Dendritic cell treated with granulocyte-macrophage colony-stimulating factor and Interleukin-4, amounts not matched to agents 40 ng/mL and 50 ng/mL, for 4 days (primary cell): ENCODE measurements at regions of chr7 and their contacts with region 1.

Region 1: DNA sequence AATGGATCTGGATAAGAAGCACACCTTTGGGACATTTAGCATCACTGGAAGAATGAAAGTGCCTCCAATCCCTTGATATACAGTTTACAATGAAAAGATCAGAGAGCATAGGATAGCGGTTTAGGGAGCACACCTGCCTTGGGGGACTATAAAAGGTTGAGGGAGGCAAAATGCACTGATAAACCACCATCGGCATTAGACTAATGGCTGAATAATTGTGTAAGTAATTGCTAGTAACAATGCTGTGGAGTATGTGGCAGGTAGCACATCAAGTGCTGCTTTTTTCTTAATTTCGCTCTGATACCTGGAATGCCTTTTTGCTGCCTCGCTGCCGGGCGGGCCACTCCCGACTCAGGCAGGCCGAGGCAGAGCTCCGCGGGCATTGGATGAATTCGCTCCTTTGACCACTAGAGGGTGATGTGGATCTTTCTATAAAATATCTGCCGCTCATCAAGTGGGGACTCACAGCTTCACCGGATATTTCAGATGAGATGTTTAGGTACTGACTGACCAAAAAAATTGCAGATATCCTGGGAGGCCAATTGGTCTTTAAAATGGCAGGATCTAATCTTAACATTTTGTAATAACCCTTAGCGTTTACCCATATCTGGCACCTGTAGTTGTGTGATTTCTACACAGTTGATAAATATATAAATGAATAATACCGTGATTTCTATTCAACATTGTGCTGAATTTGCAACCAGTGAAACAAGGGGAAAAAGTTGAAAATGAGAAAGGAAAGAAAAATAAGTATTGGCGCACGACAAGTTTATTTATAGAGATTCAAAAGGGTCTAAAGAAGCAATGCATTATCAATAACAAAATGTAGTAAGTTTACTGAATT is 116.8 kb upstream of the PRSS1 start:
- H3K4me3 Mint-ChIP-seq: no peak overlapping the region
- H3K27ac Mint-ChIP-seq: no peak overlapping the region
- H3K4me1 Mint-ChIP-seq: peaks cover 8% of the 10 kb centered on the region
- H3K27me3 Mint-ChIP-seq: peaks cover 17% of the 10 kb centered on the region

Region 2: GRCh38 chr7:142782922-142783900 is 150.7 kb after region 1 on chr7:
- intact Hi-C with region 1: loop called (anchors 1 kb)
- H3K4me3 Mint-ChIP-seq: no peak overlapping the region
- H3K27ac Mint-ChIP-seq: no peak overlapping the region
- H3K4me1 Mint-ChIP-seq: peaks cover 19% of the 10 kb centered on the region
- H3K27me3 Mint-ChIP-seq: peaks cover 11% of the 10 kb centered on the region

Region 3: GRCh38 chr7:142811154-142811737 is 178.7 kb after region 1 on chr7:
- intact Hi-C with region 1: loop called (anchors 1 kb)
- H3K4me3 Mint-ChIP-seq: no peak overlapping the region
- H3K27ac Mint-ChIP-seq: no peak overlapping the region
- H3K4me1 Mint-ChIP-seq: no peaks in the 10 kb centered on the region
- H3K27me3 Mint-ChIP-seq: peaks cover 31% of the 10 kb centered on the region

Region 4: DNA sequence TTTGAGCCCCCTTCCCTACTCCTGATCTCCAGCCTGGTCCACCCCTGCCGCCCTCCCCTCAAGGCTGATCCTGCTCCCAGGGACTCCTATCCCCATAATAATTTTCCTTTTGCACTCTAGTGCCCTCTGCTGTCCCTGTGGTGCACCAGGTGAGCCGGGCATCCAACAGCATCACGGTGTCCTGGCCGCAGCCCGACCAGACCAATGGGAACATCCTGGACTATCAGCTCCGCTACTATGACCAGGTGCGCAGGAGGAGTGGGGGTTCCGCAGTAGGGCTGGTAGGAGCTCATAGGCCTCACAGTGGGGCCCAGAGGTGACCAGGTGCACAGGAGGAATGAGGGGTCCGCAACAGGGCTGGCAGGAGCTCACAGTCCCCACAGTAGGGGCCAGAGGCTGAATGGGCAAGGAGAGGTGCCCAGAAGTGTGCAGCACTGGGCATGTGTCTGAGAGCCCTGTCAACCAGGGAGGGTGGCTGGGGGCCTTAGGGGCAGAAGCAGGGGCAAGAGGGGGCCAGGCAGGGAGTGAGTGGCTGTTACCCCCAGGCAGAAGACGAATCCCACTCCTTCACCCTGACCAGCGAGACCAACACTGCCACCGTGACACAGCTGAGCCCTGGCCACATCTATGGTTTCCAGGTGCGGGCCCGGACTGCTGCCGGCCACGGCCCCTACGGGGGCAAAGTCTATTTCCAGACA is 234.0 kb after region 1 on chr7:
- intact Hi-C with region 1: loop called (anchors 2 kb)
- H3K4me3 Mint-ChIP-seq: no peak overlapping the region
- H3K27ac Mint-ChIP-seq: no peak overlapping the region
- H3K4me1 Mint-ChIP-seq: peaks cover 19% of the 10 kb centered on the region
- H3K27me3 Mint-ChIP-seq: no peaks in the 10 kb centered on the region

Region 5: DNA sequence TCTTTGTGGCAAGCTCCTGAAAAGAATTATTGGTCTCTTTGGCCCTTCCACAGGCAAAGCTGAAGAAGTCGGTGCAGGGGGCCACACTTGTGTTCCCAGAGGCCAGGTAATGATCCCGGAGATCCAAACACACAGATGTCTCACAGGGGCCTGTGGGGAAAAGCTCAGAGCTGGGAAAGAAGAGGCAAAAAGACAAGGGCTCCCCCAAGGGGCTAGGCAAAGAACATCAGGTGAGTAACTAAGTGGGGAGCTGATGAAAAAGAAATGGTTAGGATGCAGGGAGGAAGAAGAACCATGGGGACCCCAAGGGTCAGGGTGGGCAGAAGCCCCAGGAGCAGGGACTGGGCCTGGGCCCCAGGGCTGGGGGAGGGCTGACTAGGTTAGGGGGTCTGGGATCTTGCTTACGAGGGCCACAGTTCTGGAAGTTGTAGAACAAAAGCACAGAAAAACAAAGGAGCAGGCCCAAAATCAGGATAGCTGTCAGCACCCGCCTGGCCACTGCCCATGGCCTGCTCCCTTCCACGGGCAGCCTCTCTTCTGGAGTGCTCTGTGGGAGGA is 328.5 kb after region 1 on chr7:
- intact Hi-C with region 1: no loop called
- H3K4me3 Mint-ChIP-seq: no peak overlapping the region
- H3K27ac Mint-ChIP-seq: no peak overlapping the region
- H3K4me1 Mint-ChIP-seq: peaks cover 5% of the 10 kb centered on the region
- H3K27me3 Mint-ChIP-seq: peaks cover 19% of the 10 kb centered on the region

Region 6: GRCh38 chr7:143008007-143008901 is 375.7 kb after region 1 on chr7:
- intact Hi-C with region 1: loop called (anchors 5 kb)
- H3K4me3 Mint-ChIP-seq: no peak overlapping the region
- H3K27ac Mint-ChIP-seq: no peak overlapping the region
- H3K4me1 Mint-ChIP-seq: peaks cover 13% of the 10 kb centered on the region
- H3K27me3 Mint-ChIP-seq: no peaks in the 10 kb centered on the region